ENCODE measurements at regions of chr14 and their contacts with region 1.

Region 1: GRCh38 chr14:51651388-51652167 is at the start of gene FRMD6:
- DNase-seq: peak; percentile 50 to 92
- H3K4me3 ChIP-seq: peak within 1 kb of the TSS; percentile 88 to 90
- H3K27ac ChIP-seq: peak within 1 kb of the TSS; percentile 95 to 99
- H3K4me1 ChIP-seq: peaks cover 0 to 8% of the 10 kb centered on the region in 2 donors
- H3K27me3 ChIP-seq: no peaks in the 10 kb centered on the region
- CTCF ChIP-seq: peak; percentile 80 to 87 (median 81)
- total RNA-seq, gene FRMD6: 104 TPM

Region 2: DNA sequence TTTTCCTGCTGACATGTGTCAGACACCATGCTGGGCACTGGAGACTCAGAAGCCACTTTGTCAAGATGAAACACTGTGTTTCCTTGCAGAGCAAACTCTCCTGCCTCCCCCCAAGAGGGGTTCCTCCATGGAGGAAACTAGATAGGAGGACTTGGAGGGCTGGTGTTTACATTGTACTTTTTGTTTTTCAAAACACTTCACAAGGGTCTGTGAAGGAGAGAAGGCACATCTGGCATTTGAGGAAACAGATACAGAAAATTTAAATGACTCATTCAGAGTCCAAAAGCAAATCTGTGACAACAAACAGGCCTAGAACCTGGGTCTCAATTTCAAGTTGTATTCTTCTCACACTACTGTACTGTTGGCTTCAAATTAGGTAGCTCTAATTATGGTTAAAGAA is 1248.2 kb before region 1 on chr14:
- intact Hi-C with region 1: no loop called
- DNase-seq: no peak
- H3K4me3 ChIP-seq: no peak overlapping the region
- H3K27ac ChIP-seq: no peak overlapping the region
- H3K4me1 ChIP-seq: peaks cover 0 to 6% of the 10 kb centered on the region in 2 donors
- H3K27me3 ChIP-seq: no peaks in the 10 kb centered on the region
- CTCF ChIP-seq: no peak

Region 3: DNA sequence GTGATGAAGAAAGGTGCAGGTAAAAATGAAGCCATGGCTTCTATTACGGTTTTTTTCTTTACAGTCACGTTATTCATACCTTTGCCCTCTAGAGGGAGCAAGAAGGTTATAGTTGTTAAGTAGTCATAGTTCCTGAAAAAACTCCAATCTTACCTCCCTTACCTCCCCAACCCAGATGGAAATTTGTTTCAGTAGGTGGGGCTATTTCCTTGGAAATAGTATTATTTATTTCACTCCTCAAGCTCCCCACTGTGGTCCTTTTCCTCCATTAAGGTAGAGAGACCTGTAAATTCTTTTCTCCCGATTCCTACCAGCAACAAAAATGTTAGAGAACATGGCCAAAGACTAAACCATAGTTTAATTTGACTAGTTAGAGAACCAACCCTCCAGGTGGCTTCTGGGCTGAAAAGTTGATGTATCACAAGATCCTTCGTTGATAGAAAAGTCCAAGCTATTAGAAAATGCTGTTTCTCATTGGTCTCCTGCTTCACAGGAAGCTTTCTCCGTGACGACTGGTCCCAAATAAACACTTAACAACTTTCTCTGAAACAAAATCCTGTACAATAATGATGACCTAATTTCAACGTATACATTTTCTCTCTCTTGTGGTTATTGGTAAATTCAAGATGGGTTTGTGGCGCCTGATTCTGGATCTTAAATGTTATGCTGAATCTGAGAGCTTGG is 368.0 kb before region 1 on chr14:
- intact Hi-C with region 1: loop called (anchors 2 kb)
- DNase-seq: no peak
- H3K4me3 ChIP-seq: no peak overlapping the region
- H3K27ac ChIP-seq: no peak overlapping the region
- H3K4me1 ChIP-seq: no peaks in the 10 kb centered on the region
- H3K27me3 ChIP-seq: no peaks in the 10 kb centered on the region
- CTCF ChIP-seq: peak; percentile 67 to 79 (median 68)

Region 4: GRCh38 chr14:51547260-51547659 is 104.3 kb before region 1 on chr14:
- intact Hi-C with region 1: loop called (anchors 1 kb)
- DNase-seq: peak; percentile 10 to 88
- H3K4me3 ChIP-seq: no peak overlapping the region
- H3K27ac ChIP-seq: peak overlapping the region; percentile 59 to 60
- H3K4me1 ChIP-seq: peaks cover 0 to 11% of the 10 kb centered on the region in 2 donors
- H3K27me3 ChIP-seq: no peaks in the 10 kb centered on the region
- CTCF ChIP-seq: no peak

Region 5: DNA sequence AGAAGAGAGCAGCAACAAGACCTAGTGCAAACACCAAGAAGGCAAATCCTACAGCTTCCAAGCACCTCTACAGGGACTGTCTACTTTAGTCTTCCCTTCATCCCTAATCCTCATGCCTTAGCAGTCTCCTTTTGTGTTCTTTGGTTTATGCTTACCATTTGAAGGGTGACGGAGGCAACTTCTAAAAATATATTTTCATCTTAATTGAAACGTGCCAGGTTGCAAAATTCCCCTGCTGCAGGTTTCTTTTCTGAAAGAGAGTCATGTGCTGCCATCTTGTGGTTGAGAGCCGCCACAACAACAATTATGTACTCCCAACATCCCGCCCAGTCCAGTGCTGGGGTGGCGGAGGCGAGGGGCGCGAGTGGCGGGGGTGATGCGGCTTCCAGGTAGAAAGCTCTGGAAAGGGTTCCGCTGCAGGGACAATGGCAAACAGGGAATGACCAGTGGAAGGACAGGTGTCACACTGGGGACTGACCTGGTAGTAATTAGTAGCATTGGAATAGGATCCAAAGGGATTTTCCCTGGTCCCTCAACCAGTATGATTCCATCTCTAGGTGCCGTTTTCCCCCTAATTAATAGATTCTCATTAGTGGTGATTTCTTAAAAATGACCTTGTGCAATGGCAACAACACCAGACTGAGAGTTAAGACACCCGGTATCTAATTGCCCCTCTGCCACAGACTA is 128.6 kb after region 1 on chr14:
- intact Hi-C with region 1: loop called (anchors 2 kb)
- DNase-seq: peak in 1 of 2 donors; percentile 87
- H3K4me3 ChIP-seq: no peak overlapping the region
- H3K27ac ChIP-seq: no peak overlapping the region
- H3K4me1 ChIP-seq: no peaks in the 10 kb centered on the region
- H3K27me3 ChIP-seq: no peaks in the 10 kb centered on the region
- CTCF ChIP-seq: peak; percentile 79 to 92 (median 86)

Region 6: DNA sequence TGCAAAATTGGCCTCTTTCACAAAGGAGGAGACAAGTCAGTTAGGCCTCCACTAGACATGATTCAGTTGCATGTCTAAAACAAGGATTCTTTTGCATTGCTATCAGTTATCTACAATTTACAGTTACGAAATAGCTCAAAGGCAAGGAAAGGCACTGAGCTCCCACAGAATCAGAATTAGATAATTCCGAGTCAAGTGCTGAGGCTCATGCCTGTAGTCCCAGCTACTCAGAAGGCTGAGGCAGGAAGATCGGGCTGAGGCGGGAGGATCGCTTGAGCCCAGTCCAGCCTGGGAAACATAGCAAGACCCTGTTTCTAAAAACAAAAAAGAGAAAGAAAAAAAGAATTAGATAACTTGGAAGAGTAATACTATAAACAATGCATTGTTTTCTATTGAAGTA is 325.5 kb after region 1 on chr14:
- intact Hi-C with region 1: no loop called
- DNase-seq: no peak
- H3K4me3 ChIP-seq: no peak overlapping the region
- H3K27ac ChIP-seq: no peak overlapping the region
- H3K4me1 ChIP-seq: peaks cover 0 to 2% of the 10 kb centered on the region in 2 donors
- H3K27me3 ChIP-seq: no peaks in the 10 kb centered on the region
- CTCF ChIP-seq: no peak

Region 7: DNA sequence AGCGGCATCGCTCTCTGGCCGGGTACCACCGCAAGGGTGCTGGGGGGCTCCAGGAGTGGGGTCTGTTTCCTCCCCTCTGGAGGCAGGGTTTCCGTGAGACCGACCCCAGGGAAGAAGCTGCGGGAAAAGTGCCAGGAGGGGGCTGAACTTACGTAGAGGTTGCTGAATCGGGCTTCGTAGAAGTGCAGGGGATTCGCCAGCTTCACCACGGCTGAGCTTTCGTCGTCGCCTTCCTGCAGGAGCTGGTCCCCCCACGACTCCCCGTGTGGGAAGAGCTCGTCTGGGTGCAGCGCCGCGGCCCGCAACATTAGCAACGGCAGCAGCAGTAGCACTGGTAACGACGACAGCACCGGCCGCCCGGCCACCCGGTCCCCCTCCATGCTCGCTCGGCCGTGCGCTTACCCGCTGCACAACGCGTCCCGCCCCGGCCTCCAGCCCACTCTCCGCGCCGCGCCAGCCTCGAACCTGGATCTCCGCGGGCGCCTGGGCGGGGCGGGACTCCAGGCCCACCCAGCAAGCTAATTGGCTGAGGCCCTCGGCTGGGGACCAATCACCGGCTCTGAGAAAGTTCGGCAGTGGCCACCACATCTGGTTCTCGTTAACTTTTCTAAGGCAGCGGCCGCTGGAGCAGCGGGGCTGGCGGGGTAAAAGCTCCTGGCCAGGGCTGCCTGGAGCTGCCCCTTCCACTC is 417.2 kb after region 1 on chr14 and contains the start of gene NID2:
- intact Hi-C with region 1: loop called (anchors 10 kb)
- DNase-seq: peak in 1 of 2 donors; percentile 90
- H3K4me3 ChIP-seq: peak within 1 kb of the TSS; percentile 60 to 83
- H3K27ac ChIP-seq: peak within 1 kb of the TSS; percentile 77 to 88
- H3K4me1 ChIP-seq: peaks cover 2 to 3% of the 10 kb centered on the region in 2 donors
- H3K27me3 ChIP-seq: no peaks in the 10 kb centered on the region
- CTCF ChIP-seq: peak in 1 of 3 experiments; percentile 9
- total RNA-seq, gene NID2: 12.2 TPM